Gastrocnemius medialis (tissue), 4 donors: ENCODE measurements at regions of chr4 and their contacts with region 1.

Region 1: GRCh38 chr4:153791746-153792617 is 3.1 kb upstream of the SFRP2 start:
- DNase-seq: peak in 1 of 2 donors; percentile 37
- ATAC-seq: peak in 1 of 2 donors; percentile 49
- H3K4me3 ChIP-seq: peak overlapping the region; percentile 1 to 44 (median 10)
- H3K27ac ChIP-seq: no peak overlapping the region
- H3K4me1 ChIP-seq: peaks cover 0 to 16% of the 10 kb centered on the region in 2 donors
- H3K27me3 ChIP-seq: peaks cover 62 to 70% (median 66%) of the 10 kb centered on the region in 3 donors
- CTCF ChIP-seq: peak in 1 of 5 experiments; percentile 19
- POLR2A ChIP-seq: no peak

Region 2: DNA sequence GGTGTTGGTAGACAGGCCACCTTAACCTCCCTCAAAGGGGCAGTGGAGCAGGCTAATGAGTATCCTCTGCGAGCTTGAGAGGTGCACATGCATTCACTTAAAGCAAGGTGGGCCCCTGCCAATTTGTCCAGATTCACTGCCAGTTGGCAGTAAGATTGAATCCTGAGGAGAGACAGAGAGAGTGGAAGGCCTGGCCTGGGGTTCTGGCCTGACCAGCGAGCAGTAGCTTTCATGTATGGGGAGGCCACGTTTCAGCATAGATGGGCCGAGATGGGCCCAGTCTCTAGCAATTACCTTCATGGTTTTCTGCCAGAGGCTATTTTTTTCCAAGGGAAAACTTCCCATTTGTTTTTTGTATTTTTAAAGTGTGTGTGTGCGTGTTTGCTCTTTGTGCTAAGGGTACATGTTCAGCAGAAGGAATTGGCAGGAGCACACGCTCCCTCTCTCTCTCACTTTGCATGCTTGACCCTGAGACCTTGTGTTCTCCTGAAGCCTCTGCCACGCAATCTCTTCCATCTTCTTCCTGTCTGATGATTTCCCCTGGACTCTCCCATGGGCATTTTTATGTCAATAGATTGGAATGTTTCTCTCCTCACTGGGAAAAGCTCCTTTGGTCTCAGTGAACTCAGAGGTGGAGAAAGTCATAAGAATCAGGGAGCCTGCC is 212.7 kb after region 1 on chr4:
- in situ Hi-C with region 1: no loop called
- intact Hi-C with region 1: loop called (anchors 10 kb)
- DNase-seq: peak; percentile 42 to 65
- ATAC-seq: peak; percentile 79 to 91
- H3K4me3 ChIP-seq: no peak overlapping the region
- H3K27ac ChIP-seq: peak overlapping the region; percentile 46 to 73 (median 61)
- H3K4me1 ChIP-seq: no peaks in the 10 kb centered on the region
- H3K27me3 ChIP-seq: no peaks in the 10 kb centered on the region
- CTCF ChIP-seq: no peak
- POLR2A ChIP-seq: no peak

Region 3: DNA sequence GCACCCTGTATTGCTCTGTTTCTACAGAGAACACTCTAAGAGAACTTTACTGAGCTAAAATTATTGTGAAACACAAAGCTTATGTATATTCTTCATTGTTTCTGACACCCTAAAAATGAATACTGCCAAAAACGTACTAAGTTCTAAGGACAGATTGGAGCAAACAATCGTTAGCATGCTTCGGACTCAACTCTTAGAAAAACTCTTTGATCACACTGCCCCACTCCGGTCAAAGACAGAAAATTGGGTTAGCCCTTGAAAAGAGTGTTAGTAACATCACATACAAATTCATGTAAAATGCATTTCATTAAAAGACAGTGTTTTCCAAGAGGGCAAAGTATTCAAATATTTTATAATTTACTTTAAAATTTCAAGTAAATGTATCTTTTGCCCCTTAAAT is 522.3 kb after region 1 on chr4:
- in situ Hi-C with region 1: loop called in 1 of 4 experiments (anchors 25 kb)
- intact Hi-C with region 1: no loop called
- DNase-seq: no peak
- ATAC-seq: no peak
- H3K4me3 ChIP-seq: no peak overlapping the region
- H3K27ac ChIP-seq: no peak overlapping the region
- H3K4me1 ChIP-seq: no peaks in the 10 kb centered on the region
- H3K27me3 ChIP-seq: no peaks in the 10 kb centered on the region
- CTCF ChIP-seq: no peak
- POLR2A ChIP-seq: no peak